Activated naive CD4-positive, alpha-beta T cell treated with anti-CD3 and anti-CD28 coated beads, Interleukin-2, amount 10 ng/mL, durations not matched to agents 7 days and 5 days (primary cell): ENCODE measurements at regions of chr6 and their contacts with region 1.

Region 1: GRCh38 chr6:52650941-52651340 is 20.0 kb upstream of the TMEM14A start:
- DNase-seq: no peak
- H3K4me3 Mint-ChIP-seq: no peak overlapping the region
- H3K27ac Mint-ChIP-seq: no peak overlapping the region
- H3K4me1 Mint-ChIP-seq: peaks cover 5% of the 10 kb centered on the region
- H3K27me3 Mint-ChIP-seq: peaks cover 41% of the 10 kb centered on the region

Region 2: GRCh38 chr6:52635049-52635577 is 15.8 kb before region 1 on chr6:
- CTCF ChIA-PET with region 1: interaction called, 22 read pairs
- DNase-seq: no peak
- H3K4me3 Mint-ChIP-seq: no peak overlapping the region
- H3K27ac Mint-ChIP-seq: no peak overlapping the region
- H3K4me1 Mint-ChIP-seq: peaks cover 10% of the 10 kb centered on the region
- H3K27me3 Mint-ChIP-seq: peaks cover 2% of the 10 kb centered on the region

Region 3: DNA sequence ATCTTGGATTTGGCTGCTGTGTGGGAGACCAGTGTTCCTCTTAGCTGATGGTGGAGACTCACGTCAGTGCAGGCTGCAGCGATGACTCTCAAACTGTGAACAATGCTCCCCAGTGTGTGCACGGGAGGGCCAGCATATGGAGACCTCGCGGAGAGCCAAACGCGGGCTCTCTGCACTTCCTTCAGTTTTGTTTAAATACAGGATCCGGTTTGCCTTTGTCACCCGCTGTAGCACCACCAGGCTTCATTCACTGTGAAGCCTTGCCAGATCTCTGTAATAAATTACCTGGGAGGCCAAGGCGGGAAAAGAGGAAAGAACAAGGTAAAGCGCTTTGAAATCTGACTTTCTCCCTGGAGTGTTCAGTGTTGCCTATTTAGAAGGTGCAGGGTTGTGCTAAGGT is 10.8 kb before region 1 on chr6:
- CTCF ChIA-PET with region 1: interaction called, 22 read pairs
- DNase-seq: no peak
- H3K4me3 Mint-ChIP-seq: no peak overlapping the region
- H3K27ac Mint-ChIP-seq: no peak overlapping the region
- H3K4me1 Mint-ChIP-seq: peaks cover 6% of the 10 kb centered on the region
- H3K27me3 Mint-ChIP-seq: peaks cover 19% of the 10 kb centered on the region

Region 4: DNA sequence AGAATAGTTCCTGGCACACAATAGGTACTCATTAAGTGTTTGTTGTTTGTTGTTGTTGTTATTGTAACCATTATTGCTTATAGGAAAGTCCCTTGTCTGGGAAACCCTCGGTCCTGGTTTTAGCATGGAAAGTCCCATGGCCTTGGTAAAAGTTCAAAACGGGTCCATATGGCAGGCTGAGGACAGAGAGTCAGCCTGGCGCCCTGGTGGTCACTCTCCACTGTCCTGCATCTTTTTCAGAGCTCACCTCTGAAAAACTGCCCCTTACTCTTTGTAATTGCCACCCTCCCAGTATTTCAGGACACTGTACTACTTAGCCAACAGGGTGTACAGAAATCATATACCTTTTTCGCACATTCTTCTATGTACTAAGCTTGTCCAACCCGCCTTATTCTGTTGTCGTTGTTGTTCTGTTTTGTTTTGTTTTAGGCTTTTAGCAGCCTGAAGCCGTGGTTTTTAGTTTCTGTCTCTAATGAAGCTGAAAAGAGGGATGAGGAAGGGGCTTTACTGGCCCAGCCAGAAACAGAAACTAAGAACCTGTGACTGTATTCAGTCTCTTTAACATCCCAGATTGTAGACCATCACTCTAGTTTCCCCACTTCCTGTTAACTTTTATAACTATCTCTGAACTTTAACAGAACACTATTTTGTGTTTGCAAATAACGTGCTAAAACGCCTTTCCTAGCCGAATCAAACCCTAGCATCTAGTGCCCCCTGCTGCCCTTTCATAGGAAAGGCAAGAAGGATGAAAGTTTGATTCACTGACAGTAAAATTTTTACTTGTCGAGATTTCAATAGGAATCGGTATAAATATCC is 12.4 kb after region 1 on chr6:
- CTCF ChIA-PET with region 1: interaction called, 52 read pairs
- DNase-seq: peak; percentile 75
- H3K4me3 Mint-ChIP-seq: no peak overlapping the region
- H3K27ac Mint-ChIP-seq: no peak overlapping the region
- H3K4me1 Mint-ChIP-seq: peaks cover 3% of the 10 kb centered on the region
- H3K27me3 Mint-ChIP-seq: no peaks in the 10 kb centered on the region